Naive thymus-derived CD4-positive, alpha-beta T cell (primary cell): ENCODE measurements at regions of chr10 and their contacts with region 1.

Region 1: DNA sequence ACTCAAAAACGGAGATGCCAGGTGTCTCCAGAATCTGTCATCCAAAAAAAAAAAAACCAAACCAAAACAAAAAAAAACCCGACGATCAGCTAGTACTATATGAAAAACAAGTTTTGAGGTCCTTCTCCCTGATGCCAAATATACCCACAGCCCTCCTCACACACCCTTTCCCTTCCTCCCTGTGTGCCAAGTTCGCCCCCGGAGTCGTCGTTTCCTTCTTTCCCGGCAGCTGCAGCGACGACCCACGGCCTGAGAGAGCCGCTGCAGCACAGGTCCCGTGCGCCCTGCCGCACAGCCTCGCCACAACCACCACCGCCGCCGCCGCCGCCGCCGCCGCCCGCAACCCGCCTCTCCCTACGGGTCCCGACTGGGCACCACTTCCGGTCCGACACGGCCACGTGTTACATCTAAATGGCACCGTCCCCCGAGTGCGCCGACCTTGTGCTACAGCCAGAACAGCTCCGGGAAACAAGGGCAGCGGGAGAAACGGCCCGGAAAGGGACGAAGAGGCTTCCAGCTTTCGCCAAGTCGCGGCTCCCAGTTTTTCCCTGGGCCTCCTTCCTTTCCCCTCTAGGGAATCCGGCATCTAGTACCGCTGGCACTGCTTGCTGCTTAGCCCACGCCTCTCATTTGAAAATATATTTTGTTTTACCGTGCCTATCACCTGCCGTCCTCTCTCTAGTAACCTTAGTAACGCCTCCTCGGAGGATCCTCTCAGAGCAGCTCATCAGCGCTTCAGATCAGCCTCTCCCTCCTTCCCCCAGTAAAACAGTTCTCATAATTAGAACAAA is at the start of gene FRA10AC1:
- DNase-seq: peak; percentile 77 to 92 (median 85)
- ATAC-seq: peak; percentile 97
- H3K4me3 ChIP-seq: peak within 1 kb of the TSS; percentile 85
- H3K4me3 Mint-ChIP-seq: no peak within 1 kb of the TSS
- H3K27ac ChIP-seq: peak within 1 kb of the TSS; percentile 73
- H3K27ac Mint-ChIP-seq: no peak within 1 kb of the TSS
- H3K4me1 ChIP-seq: peaks cover 9 to 16% of the 10 kb centered on the region in 2 donors
- H3K4me1 Mint-ChIP-seq: peaks cover 8 to 29% (median 11%) of the 10 kb centered on the region in 7 donors
- H3K27me3 ChIP-seq: no peaks in the 10 kb centered on the region
- H3K27me3 Mint-ChIP-seq: no peaks in the 10 kb centered on the region
- total RNA-seq, gene FRA10AC1: 15.5 to 31.0 (median 22.7) TPM

Region 2: GRCh38 chr10:92290837-92291615 is 1411.4 kb before region 1 on chr10 and contains the starts of genes CPEB3 and MARCHF5:
- CTCF ChIA-PET with region 1: interaction called, 3 read pairs
- POLR2A ChIA-PET with region 1: no interaction called
- intact Hi-C with region 1: loop called in 1 of 2 experiments (anchors 1 kb)
- DNase-seq: peak; percentile 77 to 92 (median 85)
- ATAC-seq: peak; percentile 99
- H3K4me3 ChIP-seq: peak within 1 kb of the TSS; percentile 90
- H3K4me3 Mint-ChIP-seq: peak within 1 kb of the TSS; percentile 85 to 97 (median 95)
- H3K27ac ChIP-seq: peak within 1 kb of the TSS; percentile 90
- H3K27ac Mint-ChIP-seq: peak within 1 kb of the TSS; percentile 75 to 96 (median 88)
- H3K4me1 ChIP-seq: peaks cover 0 to 6% of the 10 kb centered on the region in 2 donors
- H3K4me1 Mint-ChIP-seq: peaks cover 21 to 41% (median 31%) of the 10 kb centered on the region in 7 donors
- H3K27me3 ChIP-seq: no peaks in the 10 kb centered on the region
- H3K27me3 Mint-ChIP-seq: no peaks in the 10 kb centered on the region
- total RNA-seq, gene CPEB3: 2.0 to 3.3 (median 2.2) TPM
- total RNA-seq, gene MARCHF5: 22.0 to 37.1 (median 33.8) TPM

Region 3: DNA sequence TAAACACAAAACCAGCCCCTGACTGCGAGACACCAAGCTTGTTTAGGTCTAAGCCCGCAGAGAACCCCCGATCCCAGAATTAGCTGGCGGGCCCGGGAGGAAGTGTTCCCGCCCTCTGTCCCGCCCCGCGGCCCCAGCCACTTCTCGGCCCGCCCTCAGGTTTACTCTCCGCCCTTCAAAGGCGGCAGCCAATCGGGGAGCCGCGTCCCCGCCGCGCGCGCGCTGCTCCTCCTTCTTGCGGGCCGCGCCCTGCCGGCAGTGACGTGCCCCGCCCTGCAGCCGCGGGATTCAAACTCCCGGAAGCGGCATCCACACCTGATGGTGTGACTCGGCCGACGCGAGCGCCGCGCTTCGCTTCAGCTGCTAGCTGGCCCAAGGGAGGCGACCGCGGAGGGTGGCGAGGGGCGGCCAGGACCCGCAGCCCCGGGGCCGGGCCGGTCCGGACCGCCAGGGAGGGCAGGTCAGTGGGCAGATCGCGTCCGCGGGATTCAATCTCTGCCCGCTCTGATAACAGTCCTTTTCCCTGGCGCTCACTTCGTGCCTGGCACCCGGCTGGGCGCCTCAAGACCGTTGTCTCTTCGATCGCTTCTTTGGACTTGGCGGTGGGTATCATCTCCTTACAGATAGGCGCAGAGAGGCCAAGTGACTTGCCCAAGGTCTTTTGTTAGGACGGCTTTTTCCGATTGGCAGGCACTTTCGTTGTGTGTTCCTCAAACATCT is 205.9 kb before region 1 on chr10 and contains the start of gene CEP55:
- CTCF ChIA-PET with region 1: interaction called, 3 read pairs
- POLR2A ChIA-PET with region 1: no interaction called
- intact Hi-C with region 1: loop called (anchors 1 to 2 kb)
- DNase-seq: peak; percentile 90 to 97 (median 94)
- ATAC-seq: peak; percentile 100
- H3K4me3 ChIP-seq: peak within 1 kb of the TSS; percentile 100
- H3K4me3 Mint-ChIP-seq: peak within 1 kb of the TSS; percentile 84 to 95 (median 92)
- H3K27ac ChIP-seq: no peak within 1 kb of the TSS
- H3K27ac Mint-ChIP-seq: peak within 1 kb of the TSS in 8 of 9 donors; percentile 13 to 90 (median 72)
- H3K4me1 ChIP-seq: peaks cover 7 to 11% of the 10 kb centered on the region in 2 donors
- H3K4me1 Mint-ChIP-seq: peaks cover 0 to 48% (median 12%) of the 10 kb centered on the region in 7 donors
- H3K27me3 ChIP-seq: no peaks in the 10 kb centered on the region
- H3K27me3 Mint-ChIP-seq: peaks cover 0 to 9% (median 7%) of the 10 kb centered on the region in 5 donors
- total RNA-seq, gene CEP55: 0.54 to 48.6 TPM in 2 of 5 experiments, not detected in the others

Region 4: DNA sequence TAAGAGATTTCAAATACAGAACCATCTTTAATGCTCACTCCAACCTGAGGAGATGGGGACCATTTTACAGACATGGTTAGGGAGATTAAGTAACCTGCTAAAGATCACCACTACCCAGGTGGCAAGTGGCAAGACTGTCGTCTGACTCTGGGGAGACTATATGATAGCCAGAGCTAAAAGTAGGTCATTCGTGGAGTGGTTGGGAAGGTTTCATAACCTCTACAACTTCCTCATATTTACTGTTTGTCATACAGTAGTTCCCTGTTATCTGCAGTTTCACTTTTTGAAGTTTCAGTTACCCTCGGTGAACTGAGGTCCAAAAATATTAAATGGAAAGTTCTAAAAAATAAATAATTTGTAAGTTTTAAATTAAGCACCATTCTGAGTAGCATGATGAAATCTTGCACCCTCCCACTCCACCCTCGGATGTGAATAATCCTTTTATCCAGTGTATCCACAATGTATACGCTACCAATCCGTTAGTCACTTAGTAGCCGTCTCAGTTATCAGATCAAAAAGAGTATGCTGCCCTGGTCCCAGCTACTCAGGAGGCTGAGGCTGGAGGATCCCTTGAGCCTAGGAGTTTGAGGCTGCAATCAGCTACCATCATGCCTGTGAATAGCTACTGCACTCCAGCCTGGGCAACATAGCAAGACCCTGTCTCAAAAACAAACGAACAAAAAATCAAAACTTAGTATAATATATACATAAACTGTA is 40.4 kb after region 1 on chr10:
- CTCF ChIA-PET with region 1: no interaction called
- POLR2A ChIA-PET with region 1: no interaction called
- intact Hi-C with region 1: no loop called
- DNase-seq: no peak
- ATAC-seq: peak; percentile 85
- H3K4me3 ChIP-seq: no peak overlapping the region
- H3K4me3 Mint-ChIP-seq: peak overlapping the region in 1 of 10 donors; percentile 37
- H3K27ac ChIP-seq: no peak overlapping the region
- H3K27ac Mint-ChIP-seq: no peak overlapping the region
- H3K4me1 ChIP-seq: no peaks in the 10 kb centered on the region
- H3K4me1 Mint-ChIP-seq: no peaks in the 10 kb centered on the region
- H3K27me3 ChIP-seq: peaks cover 0 to 3% of the 10 kb centered on the region in 2 donors
- H3K27me3 Mint-ChIP-seq: peaks cover 4 to 26% (median 9%) of the 10 kb centered on the region in 5 donors

Region 5: GRCh38 chr10:93816123-93816747 is 113.8 kb after region 1 on chr10:
- CTCF ChIA-PET with region 1: no interaction called
- POLR2A ChIA-PET with region 1: no interaction called
- intact Hi-C with region 1: loop called in 1 of 2 experiments (anchors 1 kb)
- DNase-seq: peak in 6 of 9 donors; percentile 2 to 22 (median 8)
- ATAC-seq: peak; percentile 57
- H3K4me3 ChIP-seq: no peak overlapping the region
- H3K4me3 Mint-ChIP-seq: no peak overlapping the region
- H3K27ac ChIP-seq: no peak overlapping the region
- H3K27ac Mint-ChIP-seq: no peak overlapping the region
- H3K4me1 ChIP-seq: no peaks in the 10 kb centered on the region
- H3K4me1 Mint-ChIP-seq: peaks cover 0 to 13% (median 8%) of the 10 kb centered on the region in 7 donors
- H3K27me3 ChIP-seq: peaks cover 0 to 4% of the 10 kb centered on the region in 2 donors
- H3K27me3 Mint-ChIP-seq: peaks cover 35 to 50% (median 45%) of the 10 kb centered on the region in 5 donors

Region 6: GRCh38 chr10:93826355-93826754 is 123.9 kb after region 1 on chr10:
- CTCF ChIA-PET with region 1: no interaction called
- POLR2A ChIA-PET with region 1: no interaction called
- intact Hi-C with region 1: no loop called
- DNase-seq: no peak
- ATAC-seq: no peak
- H3K4me3 ChIP-seq: no peak overlapping the region
- H3K4me3 Mint-ChIP-seq: no peak overlapping the region
- H3K27ac ChIP-seq: no peak overlapping the region
- H3K27ac Mint-ChIP-seq: no peak overlapping the region
- H3K4me1 ChIP-seq: no peaks in the 10 kb centered on the region
- H3K4me1 Mint-ChIP-seq: peaks cover 0 to 10% (median 3%) of the 10 kb centered on the region in 7 donors
- H3K27me3 ChIP-seq: peaks cover 0 to 3% of the 10 kb centered on the region in 2 donors
- H3K27me3 Mint-ChIP-seq: peaks cover 0 to 16% (median 4%) of the 10 kb centered on the region in 5 donors

Region 7: DNA sequence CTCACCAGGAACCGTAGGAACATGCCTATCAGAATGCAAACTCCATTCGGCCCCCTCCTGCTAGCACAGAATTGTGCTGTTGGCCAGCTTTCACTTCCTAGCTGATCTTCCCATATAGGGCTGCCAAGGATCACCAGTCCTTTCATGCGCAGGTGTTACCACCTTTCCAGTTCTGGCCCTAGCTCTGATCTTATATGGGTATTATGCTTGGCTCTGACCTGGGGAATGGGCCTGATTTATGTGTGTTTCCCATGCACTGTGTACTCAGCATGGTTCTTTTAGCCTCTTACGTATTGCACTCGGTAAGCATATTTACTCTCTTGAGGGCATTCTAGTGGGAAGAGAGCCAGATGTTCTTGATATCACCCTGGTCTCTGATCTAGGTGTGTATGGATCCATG is 202.5 kb after region 1 on chr10:
- CTCF ChIA-PET with region 1: no interaction called
- POLR2A ChIA-PET with region 1: no interaction called
- intact Hi-C with region 1: loop called in 1 of 2 experiments (anchors 5 kb)
- DNase-seq: no peak
- ATAC-seq: no peak
- H3K4me3 ChIP-seq: no peak overlapping the region
- H3K4me3 Mint-ChIP-seq: no peak overlapping the region
- H3K27ac ChIP-seq: no peak overlapping the region
- H3K27ac Mint-ChIP-seq: peak overlapping the region in 2 of 9 donors; percentile 38 to 82
- H3K4me1 ChIP-seq: peaks cover 0 to 20% of the 10 kb centered on the region in 2 donors
- H3K4me1 Mint-ChIP-seq: peaks cover 10 to 34% (median 26%) of the 10 kb centered on the region in 7 donors
- H3K27me3 ChIP-seq: no peaks in the 10 kb centered on the region
- H3K27me3 Mint-ChIP-seq: no peaks in the 10 kb centered on the region

Region 8: DNA sequence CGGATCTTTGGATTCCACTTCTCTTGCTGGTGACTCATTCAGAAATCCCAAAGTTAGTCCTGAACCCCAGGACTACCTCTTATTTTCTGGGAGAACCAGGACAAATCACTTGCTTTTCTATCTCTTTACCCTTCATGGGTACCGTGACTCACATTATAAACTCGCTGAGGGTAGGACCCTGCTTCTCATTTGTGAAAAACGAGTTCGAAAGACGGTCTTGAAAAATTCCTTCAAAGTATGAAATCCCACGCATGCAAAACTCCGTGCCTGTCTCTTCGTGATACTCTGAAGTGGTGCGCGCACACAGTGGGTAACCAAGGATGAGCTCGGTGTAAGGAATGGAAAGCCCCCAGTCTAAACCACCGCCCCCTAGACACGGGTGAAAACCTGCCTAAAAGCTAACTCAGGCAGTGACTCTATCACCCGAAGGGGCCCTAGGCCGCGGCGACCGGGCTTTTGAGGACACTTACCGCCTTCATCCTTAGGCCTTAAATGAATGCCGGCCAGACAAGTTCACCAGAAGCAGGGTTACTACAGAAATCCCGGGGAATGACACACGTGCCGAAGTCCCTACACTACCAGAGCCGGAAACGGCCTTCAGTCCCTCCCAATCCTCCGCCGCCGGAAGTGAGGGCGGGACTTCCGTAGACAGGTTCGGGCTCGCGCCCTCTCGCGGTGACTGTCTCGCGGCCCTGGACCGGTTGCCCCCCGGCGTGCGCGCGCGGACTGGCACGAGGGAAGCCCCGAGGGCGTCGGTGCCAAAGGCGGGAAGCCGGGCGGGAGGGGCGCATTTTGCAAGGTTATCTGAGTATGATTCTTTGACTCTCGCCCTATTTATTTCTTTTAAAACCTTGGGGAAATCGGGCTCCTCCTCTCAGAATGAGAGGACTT is 660.2 kb after region 1 on chr10 and contains the start of gene NOC3L:
- CTCF ChIA-PET with region 1: no interaction called
- POLR2A ChIA-PET with region 1: no interaction called
- intact Hi-C with region 1: loop called (anchors 1 kb)
- DNase-seq: peak; percentile 85 to 96 (median 91)
- ATAC-seq: peak; percentile 97
- H3K4me3 ChIP-seq: peak within 1 kb of the TSS; percentile 76
- H3K4me3 Mint-ChIP-seq: peak within 1 kb of the TSS; percentile 93 to 98 (median 96)
- H3K27ac ChIP-seq: peak within 1 kb of the TSS; percentile 92
- H3K27ac Mint-ChIP-seq: peak within 1 kb of the TSS; percentile 90 to 99 (median 97)
- H3K4me1 ChIP-seq: peaks cover 13 to 18% of the 10 kb centered on the region in 2 donors
- H3K4me1 Mint-ChIP-seq: peaks cover 20 to 54% (median 42%) of the 10 kb centered on the region in 7 donors
- H3K27me3 ChIP-seq: no peaks in the 10 kb centered on the region
- H3K27me3 Mint-ChIP-seq: peaks cover 0 to 14% (median 9%) of the 10 kb centered on the region in 5 donors
- total RNA-seq, gene NOC3L: 8.6 to 28.8 (median 24.8) TPM

Region 9: DNA sequence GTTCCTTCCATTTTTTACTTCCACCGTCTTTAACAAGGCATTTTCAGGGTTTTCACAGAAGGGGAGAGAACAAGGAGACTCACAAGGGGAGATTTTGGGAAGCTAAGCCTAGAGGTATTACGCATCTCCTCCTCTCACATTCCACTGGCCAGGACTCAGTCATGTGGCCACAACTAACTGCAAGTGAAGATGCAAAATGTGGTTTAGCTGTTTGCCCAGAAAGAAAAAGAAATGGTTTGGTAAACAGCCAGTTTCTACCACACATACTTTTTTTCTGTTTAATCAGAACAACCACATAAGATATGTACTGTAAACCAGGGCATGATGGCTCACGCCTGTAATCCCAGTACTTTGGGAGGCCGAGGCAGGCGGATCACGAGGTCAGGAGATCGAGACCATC is 821.7 kb after region 1 on chr10:
- CTCF ChIA-PET with region 1: no interaction called
- POLR2A ChIA-PET with region 1: no interaction called
- intact Hi-C with region 1: no loop called
- DNase-seq: no peak
- ATAC-seq: no peak
- H3K4me3 ChIP-seq: no peak overlapping the region
- H3K4me3 Mint-ChIP-seq: no peak overlapping the region
- H3K27ac ChIP-seq: no peak overlapping the region
- H3K27ac Mint-ChIP-seq: no peak overlapping the region
- H3K4me1 ChIP-seq: no peaks in the 10 kb centered on the region
- H3K4me1 Mint-ChIP-seq: no peaks in the 10 kb centered on the region
- H3K27me3 ChIP-seq: no peaks in the 10 kb centered on the region
- H3K27me3 Mint-ChIP-seq: peaks cover 6 to 19% (median 16%) of the 10 kb centered on the region in 5 donors